H1 (cell line): ENCODE measurements at regions of chr3 and their contacts with region 1.

Region 1: DNA sequence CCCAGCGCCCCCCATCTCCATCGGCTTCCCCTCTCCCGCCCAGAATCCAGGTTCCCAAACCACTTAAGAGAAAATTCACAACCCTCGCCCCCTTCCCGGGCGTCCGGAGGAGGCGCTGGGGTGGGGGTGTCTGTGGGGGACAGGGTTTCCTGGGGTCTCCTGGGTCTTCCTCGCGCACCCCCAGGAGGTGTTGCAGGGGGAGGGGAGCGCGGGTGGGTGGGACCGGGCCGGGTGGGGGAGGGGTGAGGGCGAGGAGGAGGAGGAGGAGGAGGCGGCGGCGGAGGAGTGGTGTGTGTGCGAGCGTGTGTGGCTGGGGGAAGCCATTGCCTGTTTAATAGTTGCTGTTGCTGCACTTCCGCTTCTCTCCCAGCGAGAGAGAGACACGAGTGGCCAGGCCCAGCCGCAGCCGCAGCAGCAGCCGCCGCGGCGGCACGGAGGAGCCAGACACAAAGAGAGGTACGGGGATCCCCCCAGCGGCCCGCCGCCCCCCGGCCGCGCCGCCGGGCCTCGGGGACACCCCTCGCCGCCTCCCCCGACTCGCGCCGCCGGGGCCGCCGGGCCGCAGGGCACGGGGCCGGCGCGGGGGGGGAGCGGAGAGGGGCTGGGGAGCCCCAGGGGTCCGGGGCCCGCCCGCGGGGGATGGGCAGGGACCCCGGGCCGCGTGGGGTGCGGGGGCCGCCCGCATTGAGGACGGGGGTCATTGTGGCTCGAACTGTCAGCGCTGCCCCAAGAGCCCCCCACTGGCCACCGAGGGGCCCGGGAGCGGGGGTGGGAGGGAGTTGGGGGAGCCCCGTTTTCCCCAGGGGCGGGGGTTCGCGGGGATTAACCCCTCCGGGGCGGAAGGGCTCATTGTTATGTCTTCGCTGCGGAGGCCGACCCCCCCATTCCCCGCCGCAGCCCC is at the start of gene UBE2E1:
- DNase-seq: peak in 1 of 2 experiments; percentile 70
- H3K4me3 ChIP-seq: peak within 1 kb of the TSS; percentile 60 to 87 (median 73)
- H3K27ac ChIP-seq: peak within 1 kb of the TSS; percentile 68; the same call in 1 of the 2 replicates
- H3K4me1 ChIP-seq: peaks cover 0 to 17% (median 10%) of the 10 kb centered on the region in 4 experiments; a peak in 5 of 7 replicates
- H3K27me3 ChIP-seq: no peaks in the 10 kb centered on the region
- CTCF ChIP-seq: no peak
- EP300 ChIP-seq: no peak
- POLR2A ChIP-seq: peak in 1 of 2 experiments; percentile 19; a peak in 1 of 3 replicates
- RAD21 ChIP-seq: no peak
- total RNA-seq, gene UBE2E1: 130 and 141 TPM in 2 replicates

Region 2: DNA sequence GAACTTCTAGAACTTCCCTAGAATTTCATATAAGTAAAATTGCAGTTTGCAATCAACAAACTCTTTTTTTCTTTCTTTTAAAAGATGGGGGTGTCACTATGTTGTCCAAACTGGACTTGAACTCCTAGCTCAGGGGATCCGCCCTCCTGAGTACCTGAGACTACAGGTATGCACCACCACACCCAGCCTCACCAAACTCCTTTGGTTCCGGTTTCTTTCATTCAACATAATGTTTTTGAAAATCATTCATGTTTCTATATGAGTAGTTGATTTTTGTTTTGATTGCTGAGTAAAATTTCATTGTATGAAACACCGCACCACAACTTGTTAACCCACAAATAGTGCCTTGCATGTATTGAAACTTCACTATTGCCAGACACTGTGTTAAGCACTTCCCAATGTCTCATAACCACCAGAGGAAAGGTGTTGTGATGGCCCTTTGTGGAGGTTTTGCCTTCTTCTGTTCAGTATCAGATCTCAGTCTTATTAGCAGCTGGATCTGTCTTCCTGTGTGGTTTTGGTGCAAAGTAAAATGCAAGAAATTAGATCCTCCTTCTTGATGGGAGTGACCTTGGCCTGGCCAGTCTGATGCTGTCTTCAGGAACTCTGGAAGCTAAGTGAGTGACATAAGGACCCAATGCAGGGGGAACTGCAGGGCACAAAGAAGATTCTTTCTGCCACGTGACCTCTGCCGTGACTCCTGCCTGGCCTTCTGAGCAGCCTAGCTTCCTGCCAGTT is 78.9 kb before region 1 on chr3:
- CTCF ChIA-PET with region 1: no interaction called
- POLR2A ChIA-PET with region 1: no interaction called
- DNase-seq: peak in 1 of 2 experiments; percentile 28
- H3K4me3 ChIP-seq: no peak overlapping the region
- H3K27ac ChIP-seq: no peak overlapping the region
- H3K4me1 ChIP-seq: peaks cover 0 to 8% (median 3%) of the 10 kb centered on the region in 4 experiments; a peak in 4 of 7 replicates
- H3K27me3 ChIP-seq: no peaks in the 10 kb centered on the region
- CTCF ChIP-seq: no peak
- EP300 ChIP-seq: no peak
- POLR2A ChIP-seq: no peak
- RAD21 ChIP-seq: no peak

Region 3: DNA sequence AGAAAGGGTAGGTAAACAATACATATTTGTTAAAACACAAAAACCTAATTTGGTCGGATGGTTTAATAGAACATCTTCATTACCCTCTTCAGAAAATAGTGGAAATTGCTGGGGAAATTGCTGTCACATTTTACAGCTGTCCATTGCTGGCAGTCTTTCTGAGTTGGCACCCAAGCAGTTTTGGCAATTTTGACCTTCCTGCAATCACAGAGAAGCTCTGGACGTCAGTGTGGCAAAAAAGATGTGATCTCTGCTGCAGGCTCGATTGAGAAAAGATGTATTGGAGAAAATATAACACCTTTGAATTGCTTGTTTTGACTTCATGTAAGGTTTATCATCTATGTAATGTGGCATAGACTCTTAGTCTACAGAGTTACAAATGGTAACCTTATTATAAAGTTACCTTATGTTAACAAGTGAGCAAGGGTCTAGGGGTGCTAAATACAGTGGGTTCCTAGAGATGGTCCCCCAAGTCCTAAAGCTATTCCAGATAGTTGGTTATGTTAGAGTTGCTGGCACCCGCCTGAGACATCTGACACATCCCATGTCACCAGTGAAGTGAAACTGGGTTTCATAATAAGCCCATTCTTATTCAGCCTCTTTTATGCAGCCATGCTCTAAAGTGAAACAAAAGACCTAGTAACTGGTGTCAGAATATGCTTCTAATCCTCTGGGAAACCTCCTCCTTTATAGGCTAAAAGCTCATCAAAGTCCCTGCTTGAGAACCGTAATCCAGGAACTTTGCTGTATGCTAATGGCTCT is 13.9 kb after region 1 on chr3:
- CTCF ChIA-PET with region 1: interaction called, 6 read pairs
- POLR2A ChIA-PET with region 1: interaction called, 13 read pairs
- DNase-seq: no peak
- H3K4me3 ChIP-seq: no peak overlapping the region
- H3K27ac ChIP-seq: no peak overlapping the region
- H3K4me1 ChIP-seq: peaks cover 0 to 17% (median 5%) of the 10 kb centered on the region in 4 experiments; a peak in 4 of 7 replicates
- H3K27me3 ChIP-seq: no peaks in the 10 kb centered on the region
- CTCF ChIP-seq: no peak
- EP300 ChIP-seq: no peak
- POLR2A ChIP-seq: 0 out of 3 replicates have a peak, but pooled peaks of 1 of the 2 experiments have one; percentile 27
- RAD21 ChIP-seq: no peak

Region 4: GRCh38 chr3:23834082-23834870 is 28.4 kb after region 1 on chr3:
- CTCF ChIA-PET with region 1: interaction called, 4 read pairs
- POLR2A ChIA-PET with region 1: interaction called, 16 read pairs
- DNase-seq: no peak
- H3K4me3 ChIP-seq: no peak overlapping the region
- H3K27ac ChIP-seq: no peak overlapping the region
- H3K4me1 ChIP-seq: no peaks in the 10 kb centered on the region; a peak in 2 of 7 replicates
- H3K27me3 ChIP-seq: no peaks in the 10 kb centered on the region
- CTCF ChIP-seq: no peak
- EP300 ChIP-seq: no peak
- POLR2A ChIP-seq: no peak
- RAD21 ChIP-seq: peak; percentile 41 to 44

Region 5: GRCh38 chr3:23865595-23866450 is 59.9 kb after region 1 on chr3:
- CTCF ChIA-PET with region 1: no interaction called
- POLR2A ChIA-PET with region 1: interaction called, 13 read pairs
- DNase-seq: peak in 1 of 2 experiments; percentile 21
- H3K4me3 ChIP-seq: no peak overlapping the region
- H3K27ac ChIP-seq: no peak overlapping the region
- H3K4me1 ChIP-seq: peaks cover 5 to 16% (median 10%) of the 10 kb centered on the region in 4 experiments
- H3K27me3 ChIP-seq: peaks cover 0 to 1% (median 0%) of the 10 kb centered on the region in 4 experiments; a peak in 1 of 7 replicates
- CTCF ChIP-seq: no peak
- EP300 ChIP-seq: no peak
- POLR2A ChIP-seq: 0 out of 3 replicates have a peak, but pooled peaks of 1 of the 2 experiments have one; percentile 14
- RAD21 ChIP-seq: 0 out of 4 replicates have a peak, but pooled peaks of 1 of the 2 experiments have one; percentile 5